HCT116 (cell line): ENCODE measurements at regions of chr15 and their contacts with region 1.

Region 1: GRCh38 chr15:74307827-74308644 is 59.4 kb downstream of the CYP11A1 start:
- DNase-seq: peak; percentile 49
- ATAC-seq: peak; percentile 89
- H3K4me3 ChIP-seq: no peak overlapping the region
- H3K27ac ChIP-seq: no peak overlapping the region
- H3K4me1 ChIP-seq: peaks cover 4 to 18% of the 10 kb centered on the region in 2 experiments; a peak in 3 of 4 replicates
- H3K27me3 ChIP-seq: no peaks in the 10 kb centered on the region
- CTCF ChIP-seq: peak; percentile 74 to 88 (median 80); a peak in 5 of 6 replicates
- POLR2A ChIP-seq: no peak
- RAD21 ChIP-seq: peak; percentile 87

Region 2: GRCh38 chr15:74053941-74054529 is 254.0 kb before region 1 on chr15:
- CTCF ChIA-PET with region 1: interaction called, 45 read pairs
- POLR2A ChIA-PET with region 1: no interaction called
- RAD21 ChIA-PET with region 1: interaction called, 7 to 9 read pairs
- intact Hi-C with region 1: loop called (anchors 5 kb)
- DNase-seq: peak; percentile 52
- ATAC-seq: peak; percentile 99
- H3K4me3 ChIP-seq: peak overlapping the region in 1 of 2 experiments; percentile 29; a peak in 1 of 4 replicates
- H3K27ac ChIP-seq: no peak overlapping the region
- H3K4me1 ChIP-seq: peaks cover 4 to 16% of the 10 kb centered on the region in 2 experiments; a peak in 3 of 4 replicates
- H3K27me3 ChIP-seq: no peaks in the 10 kb centered on the region
- CTCF ChIP-seq: peak; percentile 33 to 62 (median 53); a peak in 5 of 6 replicates
- POLR2A ChIP-seq: no peak
- RAD21 ChIP-seq: peak; percentile 68

Region 3: GRCh38 chr15:74144153-74144775 is 163.8 kb before region 1 on chr15:
- CTCF ChIA-PET with region 1: interaction called, 33 read pairs
- POLR2A ChIA-PET with region 1: no interaction called
- RAD21 ChIA-PET with region 1: interaction called, 5 to 8 read pairs
- intact Hi-C with region 1: loop called (anchors 5 kb)
- DNase-seq: peak; percentile 29
- ATAC-seq: peak; percentile 100
- H3K4me3 ChIP-seq: no peak overlapping the region
- H3K27ac ChIP-seq: no peak overlapping the region
- H3K4me1 ChIP-seq: peaks cover 3 to 9% of the 10 kb centered on the region in 2 experiments; a peak in 3 of 4 replicates
- H3K27me3 ChIP-seq: no peaks in the 10 kb centered on the region
- CTCF ChIP-seq: peak; percentile 12 to 44 (median 27); a peak in 4 of 6 replicates
- POLR2A ChIP-seq: no peak
- RAD21 ChIP-seq: peak; percentile 44

Region 4: DNA sequence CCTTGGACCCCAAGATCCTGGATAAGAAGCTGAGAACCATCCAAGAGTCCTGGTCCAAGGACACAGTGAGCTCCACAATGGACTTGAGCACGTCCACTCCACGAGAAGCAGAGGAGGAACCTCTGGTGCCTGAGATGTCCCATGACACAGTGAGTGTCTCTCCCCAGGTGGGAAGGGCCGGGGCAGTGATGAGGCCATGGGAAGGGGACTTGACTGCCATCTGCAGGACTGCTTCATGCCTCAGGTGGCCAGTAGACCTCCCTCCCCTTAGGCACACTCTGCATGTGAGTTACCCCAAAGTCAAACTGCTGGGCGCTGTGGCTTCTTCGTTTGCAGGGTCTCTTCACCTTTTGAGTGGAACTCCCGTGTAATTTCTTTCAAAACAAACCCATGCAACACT is 12.2 kb before region 1 on chr15:
- CTCF ChIA-PET with region 1: interaction called, 13 read pairs
- POLR2A ChIA-PET with region 1: no interaction called
- RAD21 ChIA-PET with region 1: interaction called in 1 of 2 experiments, 4 read pairs
- intact Hi-C with region 1: no loop called
- DNase-seq: no peak
- ATAC-seq: peak; percentile 52; the same call in 1 of the 2 replicates
- H3K4me3 ChIP-seq: no peak overlapping the region
- H3K27ac ChIP-seq: no peak overlapping the region
- H3K4me1 ChIP-seq: 0 out of 4 replicates have a peak, but pooled peaks cover 0 to 3% of the 10 kb centered on the region in 2 experiments
- H3K27me3 ChIP-seq: peaks cover 47% of the 10 kb centered on the region
- CTCF ChIP-seq: peak; percentile 27 to 42 (median 35); a peak in 3 of 6 replicates
- POLR2A ChIP-seq: no peak
- RAD21 ChIP-seq: peak; percentile 56